Psoas muscle (tissue), 8 donors: ENCODE measurements at regions of chr3 and their contacts with region 1.

Region 1: GRCh38 chr3:156826144-156826895 is at the start of gene LEKR1:
- DNase-seq: peak; percentile 88 to 90
- ATAC-seq: peak; percentile 91 to 97 (median 95)
- H3K4me3 ChIP-seq: peak within 1 kb of the TSS; percentile 93
- H3K27ac ChIP-seq: peak within 1 kb of the TSS; percentile 89
- H3K4me1 ChIP-seq: peaks cover 5% of the 10 kb centered on the region
- H3K27me3 ChIP-seq: no peaks in the 10 kb centered on the region
- CTCF ChIP-seq: no peak
- total RNA-seq, gene LEKR1: 0.30 to 0.79 (median 0.42) TPM in 3 of 4 donors, not detected in the other

Region 2: GRCh38 chr3:155619118-155619915 is 1207.0 kb before region 1 on chr3:
- intact Hi-C with region 1: no loop called
- DNase-seq: no peak
- ATAC-seq: no peak
- H3K4me3 ChIP-seq: no peak overlapping the region
- H3K27ac ChIP-seq: no peak overlapping the region
- H3K4me1 ChIP-seq: no peaks in the 10 kb centered on the region
- H3K27me3 ChIP-seq: no peaks in the 10 kb centered on the region
- CTCF ChIP-seq: no peak

Region 3: DNA sequence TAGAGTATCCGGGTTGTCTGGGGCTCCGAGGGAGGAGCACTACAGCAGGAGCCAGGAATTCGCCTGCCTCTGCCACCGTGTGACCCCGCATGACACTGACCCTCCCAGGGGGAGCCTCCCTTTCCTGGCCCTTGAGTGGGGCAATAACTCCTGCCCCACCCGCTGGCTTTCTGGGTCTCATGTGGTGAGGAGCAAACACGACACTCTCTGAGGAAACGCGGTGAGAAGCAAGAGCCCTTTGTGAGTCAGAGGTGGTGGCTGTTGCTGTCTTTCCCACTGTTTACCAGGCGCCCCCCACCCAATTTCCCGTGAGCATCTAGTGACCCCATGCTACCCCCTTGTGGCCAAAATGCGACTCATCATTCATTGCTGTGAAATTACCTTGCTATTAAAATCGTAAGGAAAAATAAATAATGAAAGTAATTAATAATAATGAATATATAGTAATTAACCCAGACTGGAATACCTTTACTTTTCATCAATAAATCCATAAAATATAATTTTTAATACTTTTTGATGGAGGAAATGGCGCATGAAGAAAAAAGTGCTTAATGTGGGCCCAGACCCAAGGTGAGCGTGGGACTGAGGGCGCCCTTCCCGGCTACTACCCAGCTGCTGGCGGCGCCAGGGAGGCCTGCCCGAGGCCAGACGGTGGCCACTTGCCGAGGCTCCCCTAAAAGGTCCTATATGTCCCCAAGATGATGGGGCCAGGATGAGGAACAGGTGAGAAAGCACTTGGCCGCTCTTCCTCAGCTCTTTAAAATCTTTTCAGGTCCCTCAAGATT is 304.3 kb after region 1 on chr3:
- intact Hi-C with region 1: loop called in 1 of 2 experiments (anchors 5 kb)
- DNase-seq: peak; percentile 61 to 83
- ATAC-seq: peak; percentile 52 to 72 (median 61)
- H3K4me3 ChIP-seq: peak overlapping the region; percentile 45
- H3K27ac ChIP-seq: peak overlapping the region; percentile 74
- H3K4me1 ChIP-seq: peaks cover 40% of the 10 kb centered on the region
- H3K27me3 ChIP-seq: no peaks in the 10 kb centered on the region
- CTCF ChIP-seq: peak; percentile 60